BJ (cell line): ENCODE measurements at regions of chr7 and their contacts with region 1.

Region 1: DNA sequence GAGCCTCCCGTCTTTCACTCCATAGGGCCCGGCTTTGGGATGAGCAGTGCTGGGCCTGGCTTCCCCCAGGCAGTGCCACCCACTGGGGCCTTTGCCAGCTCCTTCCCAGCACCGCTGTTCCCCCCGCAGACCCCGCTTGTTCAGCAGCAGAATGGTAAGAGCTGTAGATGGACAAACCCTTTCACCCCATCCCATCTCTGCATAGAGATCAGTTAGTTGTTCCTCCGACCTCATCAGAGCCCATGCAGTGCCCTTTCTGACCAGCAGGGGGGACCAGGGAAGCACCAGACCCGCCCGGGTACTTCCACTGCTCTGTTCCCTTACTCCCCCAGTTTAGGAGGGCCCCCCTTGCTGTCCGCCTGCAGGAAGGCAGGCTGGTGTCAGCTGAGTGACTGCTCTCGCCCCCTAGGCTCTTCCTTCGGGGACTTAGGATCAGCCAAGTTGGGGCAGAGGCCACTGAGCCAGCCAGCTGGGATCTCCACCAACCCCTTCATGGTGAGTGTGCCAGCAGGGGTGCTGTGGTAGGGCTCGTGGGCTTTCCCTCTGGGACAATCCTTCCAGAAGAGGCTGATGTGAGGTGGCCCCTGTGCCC is 9.8 kb downstream of the SAP25 start:
- DNase-seq: no peak
- H3K4me3 ChIP-seq: no peak overlapping the region
- H3K27me3 ChIP-seq: no peaks in the 10 kb centered on the region
- CTCF ChIP-seq: peak; percentile 99

Region 2: GRCh38 chr7:100469227-100470044 is 94.5 kb before region 1 on chr7:
- CTCF ChIA-PET with region 1: interaction called, 50 read pairs
- POLR2A ChIA-PET with region 1: interaction called, 16 read pairs
- DNase-seq: no peak
- H3K4me3 ChIP-seq: no peak overlapping the region
- H3K27me3 ChIP-seq: no peaks in the 10 kb centered on the region
- CTCF ChIP-seq: peak; percentile 98

Region 3: GRCh38 chr7:100478966-100479665 is 84.8 kb before region 1 on chr7 and contains the start of gene TSC22D4:
- CTCF ChIA-PET with region 1: interaction called, 34 read pairs
- POLR2A ChIA-PET with region 1: no interaction called
- DNase-seq: peak; percentile 63
- H3K4me3 ChIP-seq: peak within 1 kb of the TSS; percentile 98
- H3K27me3 ChIP-seq: no peaks in the 10 kb centered on the region
- CTCF ChIP-seq: no peak
- polyA plus RNA-seq, gene TSC22D4: 9.7 and 20.7 TPM in 2 replicates

Region 4: DNA sequence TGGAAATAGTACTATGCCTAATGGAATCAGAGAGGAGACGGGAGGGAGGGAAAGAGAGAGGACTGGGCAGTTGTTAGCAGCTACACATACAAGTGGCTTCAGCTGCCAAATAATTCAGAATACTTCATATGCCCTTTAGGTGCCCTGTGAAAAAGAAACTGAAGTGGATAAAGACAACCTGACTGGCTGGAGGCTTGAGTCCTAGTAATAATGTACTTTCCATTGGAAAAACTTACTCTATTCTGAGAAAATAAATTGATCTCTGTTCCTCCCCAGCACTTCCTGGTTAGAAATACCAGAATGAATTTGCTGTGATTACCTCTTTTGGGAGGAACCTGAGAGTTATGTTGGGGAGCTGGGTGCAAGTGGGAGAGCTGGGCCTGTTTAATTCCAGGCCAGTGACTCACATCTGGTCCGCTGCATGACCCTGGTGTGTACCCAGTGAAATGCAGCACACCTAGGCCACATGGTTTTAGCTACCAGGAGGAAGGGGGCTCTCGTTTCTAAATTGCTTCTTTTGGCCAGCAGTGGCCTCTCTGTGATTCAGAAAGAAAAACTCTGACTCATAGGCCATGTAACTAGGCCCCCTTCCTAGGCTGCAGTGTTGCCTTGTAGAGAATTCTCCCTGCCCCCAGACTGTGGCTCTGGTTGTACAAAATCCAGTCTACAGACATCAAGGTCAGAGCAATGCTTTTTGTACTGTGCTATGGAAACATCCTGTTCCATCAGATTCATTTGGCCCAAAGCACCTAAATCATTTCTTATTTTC is 18.4 kb before region 1 on chr7:
- CTCF ChIA-PET with region 1: interaction called, 30 read pairs
- POLR2A ChIA-PET with region 1: no interaction called
- DNase-seq: peak; percentile 40
- H3K4me3 ChIP-seq: no peak overlapping the region
- H3K27me3 ChIP-seq: no peaks in the 10 kb centered on the region
- CTCF ChIP-seq: peak; percentile 32

Region 5: DNA sequence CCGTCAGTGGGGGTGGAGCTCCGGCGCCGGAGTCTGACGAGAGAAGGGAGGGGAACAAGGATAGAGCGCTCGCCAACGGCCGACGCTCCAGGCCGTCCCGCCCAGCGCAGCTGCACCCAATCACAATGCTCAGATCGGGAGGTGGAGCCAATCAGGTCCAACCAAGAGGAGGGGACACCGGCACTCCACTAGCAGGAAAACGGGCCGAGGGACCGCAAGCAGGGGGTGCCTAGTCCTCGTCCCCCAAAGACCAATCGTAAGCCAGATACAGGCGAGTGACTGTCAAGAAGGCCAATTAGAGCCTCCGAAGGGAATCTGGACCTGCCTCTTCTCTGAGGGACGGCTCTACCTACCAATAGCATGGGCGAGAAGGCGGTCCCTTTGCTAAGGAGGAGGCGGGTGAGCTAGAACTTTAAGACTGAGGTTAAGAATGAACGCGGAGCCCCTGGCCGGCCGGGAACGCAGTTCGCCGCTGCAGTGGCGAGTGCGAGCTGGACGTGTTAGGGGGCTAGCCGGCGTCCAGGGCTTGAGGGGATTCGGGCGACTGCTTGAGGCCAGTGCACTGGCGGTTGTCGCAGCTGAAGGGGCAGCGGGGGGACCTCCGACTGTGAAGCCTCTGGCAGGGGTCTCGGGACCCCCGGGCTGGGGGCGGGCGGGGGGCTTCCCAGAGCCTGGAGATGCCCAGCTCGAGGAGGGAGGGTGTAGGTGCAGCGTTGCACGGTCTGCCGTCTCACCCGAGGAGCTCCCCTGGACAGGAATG is 22.5 kb after region 1 on chr7 and contains the start of gene FBXO24:
- CTCF ChIA-PET with region 1: interaction called, 30 read pairs
- POLR2A ChIA-PET with region 1: interaction called, 3 read pairs
- DNase-seq: peak; percentile 99
- H3K4me3 ChIP-seq: peak within 1 kb of the TSS; percentile 98
- H3K27me3 ChIP-seq: no peaks in the 10 kb centered on the region
- CTCF ChIP-seq: no peak
- polyA plus RNA-seq, gene FBXO24: 0.33 and 0.40 TPM in 2 replicates

Region 6: GRCh38 chr7:100655908-100656674 is 92.2 kb after region 1 on chr7 and contains the start of gene ACTL6B:
- CTCF ChIA-PET with region 1: no interaction called
- POLR2A ChIA-PET with region 1: no interaction called
- DNase-seq: no peak
- H3K4me3 ChIP-seq: no peak within 1 kb of the TSS
- H3K27me3 ChIP-seq: peaks cover 4% of the 10 kb centered on the region
- CTCF ChIP-seq: no peak
- polyA plus RNA-seq, gene ACTL6B: not detected in 2 replicates